Naive thymus-derived CD8-positive, alpha-beta T cell (primary cell): ENCODE measurements at regions of chr7 and their contacts with region 1.

Region 1: GRCh38 chr7:151244196-151244840 is 4.2 kb downstream of the SMARCD3 start:
- DNase-seq: peak in 8 of 10 donors; percentile 16 to 65 (median 49)
- ATAC-seq: no peak
- H3K4me3 Mint-ChIP-seq: peak overlapping the region; percentile 61 to 85 (median 78)
- H3K27ac Mint-ChIP-seq: peak overlapping the region in 2 of 10 donors; percentile 74 to 75
- H3K4me1 Mint-ChIP-seq: peaks cover 16 to 56% (median 45%) of the 10 kb centered on the region in 4 donors
- H3K27me3 Mint-ChIP-seq: peaks cover 0 to 6% (median 0%) of the 10 kb centered on the region in 5 donors

Region 2: DNA sequence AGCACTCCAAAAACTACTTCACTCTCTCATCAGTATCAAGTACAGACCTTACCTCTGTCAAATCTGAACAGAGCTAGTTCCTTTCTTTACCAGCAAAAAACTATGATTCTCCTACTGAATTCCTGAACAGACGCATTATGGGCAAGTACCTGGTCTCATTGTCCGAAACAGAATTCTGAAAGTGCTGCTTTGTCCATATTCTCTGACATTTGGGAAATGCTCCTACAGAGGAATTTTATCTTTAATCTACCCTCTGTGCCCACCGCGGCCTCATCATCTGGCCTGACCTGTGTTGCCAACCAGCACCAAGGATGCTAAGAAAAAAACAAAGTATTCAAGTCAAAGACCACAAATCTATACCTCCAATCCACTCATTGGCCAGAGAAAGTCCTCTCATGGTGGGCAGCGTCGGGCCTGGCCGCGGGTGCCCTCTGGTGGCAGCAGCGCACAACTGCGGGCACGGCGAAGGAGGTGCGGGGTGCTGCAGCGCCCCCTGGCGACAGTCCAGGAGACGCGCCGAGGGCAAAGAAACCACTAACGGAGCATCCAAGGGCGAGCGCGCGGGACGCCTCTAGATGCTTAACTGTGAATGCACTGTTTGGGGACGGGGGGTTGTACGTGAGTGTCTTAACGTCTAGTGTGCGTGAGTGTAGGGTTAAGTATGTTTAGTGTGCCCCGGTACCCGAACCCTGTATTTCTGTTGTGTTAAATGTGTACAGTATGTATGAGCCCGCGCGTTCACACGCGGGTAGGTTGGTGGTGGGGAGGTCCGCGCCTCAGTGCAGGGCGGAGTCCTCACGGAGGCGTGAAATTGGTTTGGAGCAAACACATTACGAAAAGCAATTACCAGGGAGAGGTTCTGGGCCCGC is 71.8 kb before region 1 on chr7:
- POLR2A ChIA-PET with region 1: no interaction called
- DNase-seq: peak; percentile 61 to 88 (median 80)
- ATAC-seq: peak; percentile 75 to 78
- H3K4me3 Mint-ChIP-seq: peak overlapping the region in 1 of 10 donors; percentile 42
- H3K27ac Mint-ChIP-seq: peak overlapping the region in 3 of 10 donors; percentile 31 to 86 (median 57)
- H3K4me1 Mint-ChIP-seq: peaks cover 10 to 23% (median 11%) of the 10 kb centered on the region in 4 donors
- H3K27me3 Mint-ChIP-seq: peaks cover 40 to 82% (median 47%) of the 10 kb centered on the region in 5 donors

Region 3: GRCh38 chr7:151226875-151227782 is 17.2 kb before region 1 on chr7 and contains the start of gene ABCF2:
- POLR2A ChIA-PET with region 1: interaction called, 26 read pairs
- DNase-seq: peak; percentile 91 to 99 (median 97)
- ATAC-seq: peak; percentile 99
- H3K4me3 Mint-ChIP-seq: peak within 1 kb of the TSS; percentile 88 to 100 (median 98)
- H3K27ac Mint-ChIP-seq: peak within 1 kb of the TSS; percentile 95 to 98 (median 97)
- H3K4me1 Mint-ChIP-seq: peaks cover 25 to 47% (median 45%) of the 10 kb centered on the region in 4 donors
- H3K27me3 Mint-ChIP-seq: no peaks in the 10 kb centered on the region
- polyA plus RNA-seq, gene ABCF2: 23.0 to 40.4 (median 31.6) TPM

Region 4: DNA sequence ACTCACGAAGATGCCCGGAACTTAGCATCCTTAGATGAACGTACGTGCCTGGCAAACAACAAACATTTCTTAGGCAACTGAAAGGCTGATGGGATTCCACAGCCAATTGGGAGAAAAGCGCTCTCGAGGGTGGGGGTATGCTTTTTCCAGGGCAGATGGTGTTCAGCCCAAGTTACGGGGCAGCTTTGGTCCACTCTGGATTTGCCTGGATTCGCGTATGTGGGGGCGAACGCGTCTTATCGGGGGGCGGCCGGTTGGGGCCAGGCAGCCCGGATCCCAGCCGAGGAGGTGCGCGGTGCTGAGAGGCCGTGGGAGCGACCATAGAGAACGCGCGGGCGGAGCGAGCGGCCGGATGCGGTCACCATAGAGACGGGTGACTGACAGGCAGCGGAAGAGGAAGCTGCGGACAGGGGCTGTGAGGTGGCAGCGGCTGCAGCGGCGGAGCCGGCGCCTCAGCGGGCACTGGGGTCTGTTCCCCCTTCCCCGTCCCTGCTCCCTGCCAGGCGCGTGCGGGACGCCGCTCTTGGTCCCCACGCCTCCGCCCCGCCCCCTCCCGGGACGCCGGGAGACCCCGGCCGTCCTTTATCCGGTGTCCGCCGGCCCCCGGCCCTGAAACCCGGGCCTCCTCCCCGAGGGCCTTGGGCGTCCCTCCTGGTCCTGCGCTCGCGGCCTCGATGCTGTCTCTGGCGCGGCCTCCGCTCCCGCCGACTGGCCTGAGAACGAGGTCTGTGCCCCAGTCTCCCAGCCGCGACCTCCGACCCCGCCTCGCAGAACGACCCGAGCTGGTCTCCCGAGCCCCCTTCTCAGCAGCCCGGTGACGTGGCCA is 12.0 kb before region 1 on chr7 and contains the start of gene CHPF2:
- POLR2A ChIA-PET with region 1: interaction called, 26 read pairs
- DNase-seq: peak; percentile 75 to 92 (median 86)
- ATAC-seq: peak; percentile 87 to 90
- H3K4me3 Mint-ChIP-seq: peak within 1 kb of the TSS; percentile 95 to 100 (median 99)
- H3K27ac Mint-ChIP-seq: peak within 1 kb of the TSS; percentile 95 to 99 (median 96)
- H3K4me1 Mint-ChIP-seq: peaks cover 22 to 52% (median 41%) of the 10 kb centered on the region in 4 donors
- H3K27me3 Mint-ChIP-seq: no peaks in the 10 kb centered on the region
- polyA plus RNA-seq, gene CHPF2: 16.8 to 20.1 (median 17.6) TPM